PC-9 (cell line): ENCODE measurements at regions of chr9 and their contacts with region 1.

Region 1: DNA sequence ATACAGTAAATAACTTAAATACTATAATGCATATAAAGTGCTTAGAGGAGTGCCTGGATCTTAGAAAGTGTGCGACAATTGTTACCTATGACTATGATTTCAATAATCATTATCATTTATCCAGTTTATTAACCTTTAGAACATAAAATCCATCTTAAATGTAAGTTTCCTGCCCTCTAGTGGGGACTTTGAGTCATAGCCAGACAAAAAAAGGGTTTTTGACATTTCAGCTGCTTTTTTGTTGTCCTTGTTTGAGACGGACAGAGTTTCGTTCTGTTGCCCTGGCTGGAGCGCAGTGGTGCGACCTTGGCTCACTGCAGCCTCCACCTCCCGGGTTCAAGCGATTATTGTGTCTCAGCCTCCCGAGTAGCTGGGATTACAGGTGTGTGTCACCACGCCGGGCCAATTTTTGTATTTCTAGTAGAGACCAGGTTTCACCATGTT is 9.7 kb upstream of the C9orf152 start:
- DNase-seq: peak in 1 of 2 experiments; percentile 10
- H3K4me3 ChIP-seq: peak overlapping the region; percentile 33; the same call in 1 of the 2 replicates
- H3K27ac ChIP-seq: no peak overlapping the region
- H3K4me1 ChIP-seq: no peaks in the 10 kb centered on the region
- H3K27me3 ChIP-seq: no peaks in the 10 kb centered on the region
- CTCF ChIP-seq: peak; percentile 89

Region 2: DNA sequence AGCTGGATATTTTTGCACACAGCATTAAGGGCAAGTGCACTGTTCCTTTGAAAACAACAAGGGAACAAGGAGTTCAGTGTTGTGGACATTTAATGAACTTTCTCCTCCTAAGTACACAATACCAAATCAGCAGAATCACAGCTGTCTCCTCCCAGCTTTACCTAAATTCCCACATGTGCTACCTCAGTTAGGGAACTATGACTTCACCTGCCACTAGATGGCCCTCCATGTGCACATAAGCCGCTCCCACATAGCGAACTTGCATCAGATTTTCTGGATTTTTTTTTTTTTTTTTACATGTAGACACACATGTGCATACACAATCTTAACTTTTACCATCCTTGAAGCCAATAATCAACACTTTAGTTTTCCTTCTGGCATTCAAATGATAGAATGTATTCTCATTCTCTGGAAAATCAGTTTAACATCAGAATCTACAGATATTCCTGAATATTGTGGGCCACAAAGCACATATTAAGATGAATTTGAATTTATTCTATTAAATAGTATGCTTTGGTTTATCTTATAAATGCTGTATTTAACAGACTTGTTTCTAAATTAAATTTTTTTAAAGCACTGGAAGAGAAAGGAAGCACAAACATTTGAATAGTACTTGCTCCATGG is 314.1 kb before region 1 on chr9:
- CTCF ChIA-PET with region 1: no interaction called
- POLR2A ChIA-PET with region 1: no interaction called
- intact Hi-C with region 1: loop called (anchors 2 kb)
- DNase-seq: peak; percentile 68 to 70
- H3K4me3 ChIP-seq: no peak overlapping the region
- H3K27ac ChIP-seq: no peak overlapping the region
- H3K4me1 ChIP-seq: 0 out of 2 replicates have a peak, but pooled peaks cover 3% of the 10 kb centered on the region
- H3K27me3 ChIP-seq: no peaks in the 10 kb centered on the region
- CTCF ChIP-seq: peak; percentile 91

Region 3: GRCh38 chr9:110076894-110077725 is 140.6 kb before region 1 on chr9:
- CTCF ChIA-PET with region 1: no interaction called
- POLR2A ChIA-PET with region 1: no interaction called
- intact Hi-C with region 1: no loop called
- DNase-seq: peak in 1 of 2 experiments; percentile 58
- H3K4me3 ChIP-seq: no peak overlapping the region
- H3K27ac ChIP-seq: no peak overlapping the region
- H3K4me1 ChIP-seq: 0 out of 2 replicates have a peak, but pooled peaks cover 6% of the 10 kb centered on the region
- H3K27me3 ChIP-seq: no peaks in the 10 kb centered on the region
- CTCF ChIP-seq: no peak